Psoas muscle (tissue), 8 donors: ENCODE measurements at regions of chr11 and their contacts with region 1.

Region 1: GRCh38 chr11:77091146-77091940 is 11.3 kb upstream of the OMP start:
- DNase-seq: peak; percentile 80 to 87
- ATAC-seq: peak; percentile 85 to 96 (median 90)
- H3K4me3 ChIP-seq: no peak overlapping the region
- H3K27ac ChIP-seq: no peak overlapping the region
- H3K4me1 ChIP-seq: no peaks in the 10 kb centered on the region
- H3K27me3 ChIP-seq: no peaks in the 10 kb centered on the region
- CTCF ChIP-seq: peak; percentile 91

Region 2: DNA sequence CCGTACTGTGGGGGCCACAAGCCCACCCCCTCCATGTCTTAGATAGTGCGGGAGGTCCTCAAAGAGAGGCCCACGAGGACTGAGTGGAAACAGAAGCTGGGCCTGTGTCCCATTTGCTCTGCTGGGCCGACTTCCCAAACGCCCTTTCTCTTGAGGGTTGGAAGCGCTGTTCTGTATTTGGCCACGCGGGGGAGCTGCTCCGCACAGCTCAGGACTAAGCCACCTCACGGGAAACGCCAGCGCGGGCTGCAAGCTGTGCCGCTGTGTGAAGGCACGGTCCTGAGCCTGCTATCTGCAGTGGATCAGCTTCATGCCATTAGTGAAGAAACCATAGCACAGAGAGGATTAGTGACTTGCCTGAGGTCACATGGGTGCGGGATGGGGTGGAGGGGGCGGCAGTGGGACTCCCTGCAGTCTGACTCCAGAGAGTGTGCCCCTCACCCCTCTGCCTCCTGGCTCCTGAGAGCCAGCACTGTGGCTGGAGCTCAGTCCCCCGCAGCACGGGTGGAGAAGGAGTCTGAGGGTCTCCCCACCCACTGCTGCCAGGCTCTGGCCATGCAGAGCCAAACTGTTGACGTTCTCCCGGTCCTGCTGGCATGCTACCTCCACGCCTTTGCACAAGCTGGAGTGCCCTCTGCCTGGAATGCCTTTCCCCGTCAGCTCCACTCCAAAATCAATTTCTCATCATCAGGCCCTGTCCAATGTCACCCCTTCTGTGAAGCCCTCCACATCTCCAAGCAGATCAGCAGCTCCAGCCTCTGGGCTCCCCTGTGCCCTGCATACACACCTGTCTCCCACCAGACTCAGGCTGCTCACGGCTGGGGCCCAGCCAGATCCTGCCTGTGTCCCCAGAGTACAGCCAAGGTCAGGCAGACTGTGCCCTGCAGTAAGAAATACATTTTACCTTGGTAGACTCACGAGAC is 369.3 kb before region 1 on chr11:
- intact Hi-C with region 1: loop called in 1 of 2 experiments (anchors 10 kb)
- DNase-seq: peak; percentile 86 to 90
- ATAC-seq: peak; percentile 86 to 98 (median 94)
- H3K4me3 ChIP-seq: peak overlapping the region; percentile 18
- H3K27ac ChIP-seq: no peak overlapping the region
- H3K4me1 ChIP-seq: peaks cover 8% of the 10 kb centered on the region
- H3K27me3 ChIP-seq: peaks cover 0 to 7% (median 0%) of the 10 kb centered on the region in 3 donors
- CTCF ChIP-seq: peak; percentile 84

Region 3: DNA sequence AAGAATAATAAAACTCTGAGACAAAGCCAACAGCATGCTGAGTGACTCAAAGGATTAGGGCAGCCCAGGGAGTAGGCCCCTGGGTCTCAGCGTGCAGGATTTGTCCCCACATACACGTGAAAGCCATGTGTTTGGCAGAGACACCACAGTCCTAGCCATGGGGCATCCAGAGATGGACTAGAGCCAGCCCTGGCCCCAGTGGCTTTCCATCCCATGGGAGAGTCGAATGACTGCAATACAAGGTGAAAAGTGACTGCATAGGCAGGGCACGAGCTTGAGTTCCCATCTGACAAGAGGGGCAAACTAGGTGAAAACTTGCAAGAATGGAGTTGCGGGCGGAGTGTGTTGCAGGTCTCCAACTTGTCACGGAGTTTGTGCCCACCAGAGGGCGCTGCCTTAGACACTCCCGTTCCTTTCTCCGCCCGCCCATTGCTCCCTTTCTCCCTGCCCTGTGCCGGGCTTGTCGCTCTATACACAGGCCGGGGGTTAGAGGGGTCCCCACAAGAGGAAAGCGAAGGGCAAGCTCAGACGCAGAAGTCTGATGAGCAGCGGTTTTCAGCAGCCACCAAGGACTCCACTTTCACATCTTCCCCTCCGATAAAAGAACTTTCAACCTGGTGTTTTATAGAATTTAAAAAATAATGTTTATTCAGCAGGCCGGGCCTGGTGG is 284.0 kb before region 1 on chr11:
- intact Hi-C with region 1: loop called in 1 of 2 experiments (anchors 5 kb)
- DNase-seq: peak; percentile 88 to 93
- ATAC-seq: peak; percentile 90 to 93 (median 91)
- H3K4me3 ChIP-seq: peak overlapping the region; percentile 12
- H3K27ac ChIP-seq: no peak overlapping the region
- H3K4me1 ChIP-seq: no peaks in the 10 kb centered on the region
- H3K27me3 ChIP-seq: no peaks in the 10 kb centered on the region
- CTCF ChIP-seq: peak; percentile 80

Region 4: GRCh38 chr11:77019976-77020595 is 71.3 kb before region 1 on chr11:
- intact Hi-C with region 1: no loop called
- DNase-seq: no peak
- ATAC-seq: no peak
- H3K4me3 ChIP-seq: no peak overlapping the region
- H3K27ac ChIP-seq: no peak overlapping the region
- H3K4me1 ChIP-seq: no peaks in the 10 kb centered on the region
- H3K27me3 ChIP-seq: no peaks in the 10 kb centered on the region
- CTCF ChIP-seq: no peak

Region 5: DNA sequence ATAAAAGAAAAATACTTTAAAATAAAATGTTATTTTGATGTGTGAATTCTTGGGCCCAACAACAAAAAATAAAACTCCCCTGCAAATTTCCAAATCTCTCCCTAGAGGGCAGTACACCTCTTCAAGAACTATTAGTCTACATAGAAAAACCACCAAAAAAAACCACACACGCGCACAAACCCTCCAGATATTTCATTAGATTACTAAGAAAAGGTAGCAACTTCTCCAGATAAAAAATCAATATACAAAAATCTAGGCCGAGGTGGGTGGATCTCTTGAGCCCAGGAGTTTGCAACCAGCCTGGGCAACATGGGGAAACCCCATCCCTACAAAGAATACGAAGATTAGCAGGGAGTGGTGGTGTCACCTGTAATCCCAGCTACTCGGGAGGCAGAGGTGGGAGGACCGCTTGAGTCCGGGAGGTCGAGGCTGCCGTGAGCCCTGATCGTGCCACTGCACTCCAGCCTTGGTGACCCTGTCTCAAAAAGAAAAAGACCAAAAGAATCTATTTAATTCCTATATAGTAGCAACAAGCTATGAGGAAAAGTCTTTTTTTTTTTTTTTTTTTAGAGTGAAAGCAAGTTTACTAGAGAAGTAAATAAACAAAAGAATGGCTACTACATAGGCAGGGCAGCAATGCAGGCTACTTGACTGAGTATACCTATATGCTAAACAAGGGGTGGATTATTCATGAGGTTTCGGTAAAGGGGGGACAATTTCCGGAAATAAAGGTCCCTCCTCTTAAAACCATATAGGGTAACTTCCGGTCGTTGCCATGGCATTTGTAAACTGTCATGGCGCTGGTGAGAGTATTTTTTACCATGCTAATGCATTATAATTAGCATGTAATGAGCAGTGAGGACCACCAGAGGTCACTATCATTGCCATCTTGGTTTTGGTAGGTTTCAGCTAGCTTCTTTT is 44.1 kb before region 1 on chr11:
- intact Hi-C with region 1: loop called (anchors 2 kb)
- DNase-seq: peak in 1 of 2 donors; percentile 45
- ATAC-seq: peak; percentile 87 to 97 (median 94)
- H3K4me3 ChIP-seq: peak overlapping the region; percentile 56
- H3K27ac ChIP-seq: no peak overlapping the region
- H3K4me1 ChIP-seq: no peaks in the 10 kb centered on the region
- H3K27me3 ChIP-seq: peaks cover 0 to 31% (median 3%) of the 10 kb centered on the region in 3 donors
- CTCF ChIP-seq: peak; percentile 72

Region 6: GRCh38 chr11:77449060-77449521 is 357.7 kb after region 1 on chr11:
- intact Hi-C with region 1: no loop called
- DNase-seq: no peak
- ATAC-seq: no peak
- H3K4me3 ChIP-seq: no peak overlapping the region
- H3K27ac ChIP-seq: no peak overlapping the region
- H3K4me1 ChIP-seq: no peaks in the 10 kb centered on the region
- H3K27me3 ChIP-seq: no peaks in the 10 kb centered on the region
- CTCF ChIP-seq: no peak